ENCODE measurements at regions of chr9 and their contacts with region 1.

Region 1: GRCh38 chr9:19456996-19457692 is 48.3 kb downstream of the ACER2 start:
- DNase-seq: peak; percentile 32
- ATAC-seq: peak; percentile 97
- H3K4me3 Mint-ChIP-seq: no peak overlapping the region
- H3K27ac Mint-ChIP-seq: no peak overlapping the region
- H3K4me1 Mint-ChIP-seq: peaks cover 13% of the 10 kb centered on the region
- H3K27me3 Mint-ChIP-seq: no peaks in the 10 kb centered on the region
- CTCF ChIP-seq: peak; percentile 80

Region 2: DNA sequence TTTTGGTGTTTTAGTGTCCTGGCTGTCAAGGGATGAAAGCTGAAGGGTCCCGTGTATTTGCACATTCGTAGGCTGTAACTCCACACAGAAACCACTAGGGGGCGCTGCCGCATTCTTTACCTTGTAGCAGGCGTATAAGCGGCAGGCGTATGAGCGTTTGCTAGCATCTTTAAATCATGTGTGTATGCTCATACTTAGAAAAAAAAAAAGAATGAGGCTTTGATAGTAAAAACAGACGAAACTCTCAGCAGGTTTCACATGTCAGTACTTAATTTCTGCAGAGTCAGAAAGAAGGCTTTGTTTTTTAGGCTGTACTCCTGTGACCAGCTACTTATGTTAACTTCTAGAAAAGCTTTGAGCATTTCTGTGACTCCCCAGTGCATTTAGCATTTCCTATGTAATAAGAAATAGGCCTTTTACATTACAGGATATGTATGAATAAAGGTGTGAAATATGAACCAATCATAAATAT is 1202.0 kb before region 1 on chr9:
- CTCF ChIA-PET with region 1: interaction called, 10 read pairs
- POLR2A ChIA-PET with region 1: no interaction called
- intact Hi-C with region 1: no loop called
- DNase-seq: peak; percentile 29
- ATAC-seq: peak; percentile 72
- H3K4me3 Mint-ChIP-seq: no peak overlapping the region
- H3K27ac Mint-ChIP-seq: no peak overlapping the region
- H3K4me1 Mint-ChIP-seq: no peaks in the 10 kb centered on the region
- H3K27me3 Mint-ChIP-seq: peaks cover 4% of the 10 kb centered on the region
- CTCF ChIP-seq: peak; percentile 93

Region 3: GRCh38 chr9:19028835-19029451 is 428.2 kb before region 1 on chr9:
- CTCF ChIA-PET with region 1: interaction called, 6 read pairs
- POLR2A ChIA-PET with region 1: no interaction called
- intact Hi-C with region 1: loop called (anchors 1 kb)
- DNase-seq: no peak
- ATAC-seq: peak; percentile 49
- H3K4me3 Mint-ChIP-seq: no peak overlapping the region
- H3K27ac Mint-ChIP-seq: no peak overlapping the region
- H3K4me1 Mint-ChIP-seq: peaks cover 2% of the 10 kb centered on the region
- H3K27me3 Mint-ChIP-seq: peaks cover 5% of the 10 kb centered on the region
- CTCF ChIP-seq: no peak

Region 4: GRCh38 chr9:19102631-19103345 is 354.4 kb before region 1 on chr9 and contains the start of gene HAUS6:
- CTCF ChIA-PET with region 1: interaction called, 3 read pairs
- POLR2A ChIA-PET with region 1: interaction called, 4 read pairs
- intact Hi-C with region 1: loop called (anchors 1 kb)
- DNase-seq: peak; percentile 86
- ATAC-seq: peak; percentile 94
- H3K4me3 Mint-ChIP-seq: peak within 1 kb of the TSS; percentile 98
- H3K27ac Mint-ChIP-seq: peak within 1 kb of the TSS; percentile 93
- H3K4me1 Mint-ChIP-seq: peaks cover 17% of the 10 kb centered on the region
- H3K27me3 Mint-ChIP-seq: no peaks in the 10 kb centered on the region
- CTCF ChIP-seq: no peak
- total RNA-seq, gene HAUS6: 13.7 and 15.3 TPM in 2 replicates

Region 5: DNA sequence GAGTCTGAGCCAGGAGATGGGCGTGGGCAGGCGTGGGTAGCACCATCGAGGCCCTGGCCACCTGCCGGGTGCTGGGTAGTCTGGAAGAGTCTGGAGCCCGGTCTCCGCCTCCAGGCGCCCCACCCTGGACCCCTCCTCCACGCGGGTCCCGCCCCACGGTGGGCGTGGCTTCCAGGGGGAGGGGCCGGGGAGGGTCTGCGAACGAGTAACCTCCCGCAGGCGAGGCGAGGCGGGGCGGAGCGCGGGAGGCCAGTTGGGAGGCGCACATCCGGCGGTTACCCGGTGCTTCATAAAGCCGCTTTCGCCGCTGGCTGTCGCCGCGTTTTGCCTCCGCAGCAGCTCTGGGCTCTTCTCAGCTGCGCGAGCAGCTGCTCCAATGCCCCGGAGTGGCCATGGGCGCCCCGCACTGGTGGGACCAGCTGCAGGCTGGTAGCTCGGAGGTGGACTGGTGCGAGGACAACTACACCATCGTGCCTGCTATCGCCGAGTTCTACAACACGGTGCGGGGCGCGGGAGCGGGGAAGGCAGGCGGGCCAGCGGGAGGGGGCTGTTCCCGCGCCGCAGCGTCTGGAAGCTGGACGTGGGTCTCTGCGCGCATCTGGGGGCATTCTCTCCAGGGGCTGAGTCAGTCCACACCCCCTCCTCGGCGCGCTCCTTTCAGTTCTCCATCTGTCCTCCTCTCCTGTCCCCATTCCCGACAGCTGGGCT is 48.3 kb before region 1 on chr9 and contains the start of gene ACER2:
- CTCF ChIA-PET with region 1: interaction called, 3 read pairs
- POLR2A ChIA-PET with region 1: interaction called, 5 read pairs
- intact Hi-C with region 1: loop called (anchors 1 kb)
- DNase-seq: peak; percentile 99
- ATAC-seq: peak; percentile 97
- H3K4me3 Mint-ChIP-seq: peak within 1 kb of the TSS; percentile 94
- H3K27ac Mint-ChIP-seq: peak within 1 kb of the TSS; percentile 69
- H3K4me1 Mint-ChIP-seq: peaks cover 12% of the 10 kb centered on the region
- H3K27me3 Mint-ChIP-seq: no peaks in the 10 kb centered on the region
- CTCF ChIP-seq: no peak
- total RNA-seq, gene ACER2: 1.4 and 2.0 TPM in 2 replicates